Activated T-helper 2 cell treated with anti-CD3 and anti-CD28 coated beads, Interferon-gamma antibody, Interleukin-2, Interleukin-4, amounts not matched to agents 10 μg/mL and 5 μg/mL and 100 μg/mL, durations not matched to agents 14 hours and 24 hours and 36 hours (primary cell): ENCODE measurements at regions of chr5 and their contacts with region 1.

Region 1: DNA sequence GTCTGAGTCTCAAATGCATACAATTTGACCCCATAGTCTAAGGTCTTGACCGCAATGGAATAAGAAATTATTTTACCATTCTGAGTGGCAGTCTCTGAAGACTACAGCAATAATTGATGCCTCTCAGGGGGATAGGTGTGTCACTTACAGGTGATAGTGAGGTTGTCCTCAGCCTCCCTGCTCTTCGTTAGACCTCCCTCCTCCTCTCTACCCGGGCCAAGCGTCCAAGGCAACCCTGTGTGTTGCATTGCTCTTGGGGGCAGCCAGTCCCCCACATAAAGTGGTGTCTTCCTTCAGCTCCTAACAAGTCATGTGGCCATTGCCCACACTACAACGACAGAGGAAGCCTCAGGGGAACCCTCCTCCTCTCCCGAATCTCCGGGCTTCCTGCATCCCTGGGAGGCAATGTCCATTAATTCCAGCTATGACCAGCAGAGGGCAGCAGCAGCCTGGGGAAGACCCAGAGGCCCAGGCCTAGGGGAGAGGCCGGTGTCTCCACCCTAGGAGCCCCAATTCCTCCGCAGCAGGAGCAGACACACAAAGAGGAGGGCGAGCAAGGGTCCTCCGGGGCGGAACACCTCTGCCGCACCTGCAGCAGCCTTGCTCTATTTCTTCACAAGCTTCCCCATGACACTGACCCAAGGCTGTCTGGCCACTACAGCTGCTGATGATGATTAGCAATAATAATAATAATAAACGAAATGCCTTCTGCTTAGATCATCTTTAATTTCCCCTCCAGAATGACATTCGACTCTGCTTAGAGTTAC is 134.8 kb downstream of the KCNIP1 start:
- DNase-seq: peak; percentile 41
- H3K4me3 Mint-ChIP-seq: no peak overlapping the region
- H3K27ac Mint-ChIP-seq: no peak overlapping the region
- H3K4me1 Mint-ChIP-seq: no peaks in the 10 kb centered on the region
- H3K27me3 Mint-ChIP-seq: peaks cover 4% of the 10 kb centered on the region

Region 2: DNA sequence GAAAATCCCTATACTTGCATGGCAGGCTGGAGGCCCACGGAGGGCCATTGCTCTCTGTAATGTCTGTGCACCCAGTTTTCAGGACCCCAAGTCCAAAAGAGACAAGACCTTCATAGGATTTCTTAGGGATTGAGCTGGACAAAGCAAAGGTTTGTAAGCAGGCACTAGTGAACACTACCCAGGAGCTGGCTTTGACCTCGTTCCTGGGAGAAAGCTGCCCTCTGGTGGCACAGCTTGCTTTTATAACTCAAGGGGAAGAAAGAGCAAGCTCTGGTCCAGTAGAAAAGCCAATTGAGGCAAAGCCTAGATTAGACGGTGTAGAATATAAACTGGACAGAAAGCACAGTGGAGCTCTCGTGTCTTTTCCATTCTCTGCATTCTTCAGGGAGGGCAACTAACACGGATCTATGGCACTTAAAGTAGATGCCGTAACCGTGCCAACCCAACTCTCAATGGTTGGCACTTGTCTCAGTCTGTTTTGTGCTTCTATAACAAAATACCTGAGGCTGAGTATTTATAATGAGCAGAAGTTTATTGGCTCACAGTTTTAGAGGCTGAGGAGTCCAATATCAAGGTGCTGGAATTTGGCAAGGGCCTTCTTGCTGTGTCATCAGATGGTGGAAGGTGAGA is 152.8 kb after region 1 on chr5:
- intact Hi-C with region 1: loop called (anchors 5 kb)
- DNase-seq: no peak
- H3K4me3 Mint-ChIP-seq: no peak overlapping the region
- H3K27ac Mint-ChIP-seq: no peak overlapping the region
- H3K4me1 Mint-ChIP-seq: no peaks in the 10 kb centered on the region
- H3K27me3 Mint-ChIP-seq: no peaks in the 10 kb centered on the region

Region 3: GRCh38 chr5:171188016-171188415 is 549.4 kb after region 1 on chr5:
- intact Hi-C with region 1: no loop called
- DNase-seq: no peak
- H3K4me3 Mint-ChIP-seq: no peak overlapping the region
- H3K27ac Mint-ChIP-seq: no peak overlapping the region
- H3K4me1 Mint-ChIP-seq: no peaks in the 10 kb centered on the region
- H3K27me3 Mint-ChIP-seq: no peaks in the 10 kb centered on the region